ENCODE measurements at regions of chr6 and their contacts with region 1.

Region 1: GRCh38 chr6:31971993-31972708 is at the start of gene DXO:
- DNase-seq: peak; percentile 94 to 95
- ATAC-seq: peak; percentile 97 to 98
- H3K4me3 ChIP-seq: peak within 1 kb of the TSS; percentile 74 to 91 (median 85)
- H3K27ac ChIP-seq: peak within 1 kb of the TSS; percentile 90 to 97 (median 92)
- H3K4me1 ChIP-seq: peaks cover 23 to 29% of the 10 kb centered on the region in 2 donors
- H3K27me3 ChIP-seq: no peaks in the 10 kb centered on the region
- CTCF ChIP-seq: no peak
- POLR2A ChIP-seq: peak; percentile 67 to 74
- total RNA-seq, gene DXO: 5.8 to 11.5 (median 8.5) TPM

Region 2: DNA sequence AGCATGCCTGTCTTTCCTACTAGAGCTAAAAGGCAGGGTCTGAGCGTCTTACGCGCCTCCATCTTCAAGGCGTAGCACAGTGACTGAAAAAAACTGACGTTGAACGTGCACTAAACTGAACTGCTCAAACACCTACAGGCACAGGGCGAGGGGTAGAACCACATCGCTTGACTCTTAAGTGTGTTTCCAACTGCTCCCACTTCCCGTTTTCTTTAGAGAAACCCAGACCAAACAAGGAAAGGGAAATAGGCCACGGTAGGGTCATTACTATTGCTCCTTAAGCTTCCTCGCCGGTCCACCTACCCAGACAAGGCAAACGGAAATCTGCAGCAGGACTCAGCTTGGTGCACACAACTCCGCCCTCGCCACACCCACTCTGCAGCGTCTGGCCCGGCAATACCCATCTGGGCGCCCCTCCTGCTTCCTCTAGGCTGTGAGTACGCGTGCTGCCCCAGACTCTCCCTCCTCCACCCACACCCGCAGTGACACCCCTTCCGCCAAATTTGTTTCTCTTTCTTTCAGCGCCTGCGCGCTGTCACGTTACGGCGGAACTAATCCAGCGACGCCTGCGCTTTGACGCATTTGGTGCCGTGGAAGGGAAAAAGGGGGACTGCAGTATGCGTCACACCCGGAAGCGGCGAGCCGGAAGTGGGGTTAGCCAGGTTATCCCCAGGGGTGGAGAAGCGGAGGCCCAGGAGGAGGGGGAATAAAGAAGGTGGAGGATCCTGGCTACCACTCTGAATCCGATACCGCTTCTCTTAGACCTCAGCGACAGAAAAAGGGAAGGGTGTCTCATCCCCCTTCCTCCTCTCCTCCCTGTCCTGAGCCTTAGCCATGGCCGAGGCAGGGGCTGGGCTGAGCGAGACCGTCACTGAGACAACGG is 1905.3 kb before region 1 on chr6 and contains the start of gene PPP1R11:
- in situ Hi-C with region 1: no loop called
- intact Hi-C with region 1: loop called (anchors 10 kb)
- DNase-seq: peak; percentile 97 to 98
- ATAC-seq: peak; percentile 95 to 96
- H3K4me3 ChIP-seq: peak within 1 kb of the TSS; percentile 79 to 95 (median 86)
- H3K27ac ChIP-seq: peak within 1 kb of the TSS; percentile 85 to 93 (median 90)
- H3K4me1 ChIP-seq: peaks cover 29 to 33% of the 10 kb centered on the region in 2 donors
- H3K27me3 ChIP-seq: peaks cover 9 to 16% (median 10%) of the 10 kb centered on the region in 3 donors
- CTCF ChIP-seq: peak in 1 of 5 experiments; percentile 8
- POLR2A ChIP-seq: peak; percentile 57 to 80
- total RNA-seq, gene PPP1R11: 34.0 to 72.4 (median 49.9) TPM

Region 3: GRCh38 chr6:31739639-31740396 is 232.3 kb before region 1 on chr6 and contains the start of gene MSH5:
- in situ Hi-C with region 1: no loop called
- intact Hi-C with region 1: loop called (anchors 10 kb)
- DNase-seq: peak; percentile 99
- ATAC-seq: peak; percentile 99
- H3K4me3 ChIP-seq: peak within 1 kb of the TSS; percentile 62 to 79 (median 73)
- H3K27ac ChIP-seq: peak within 1 kb of the TSS; percentile 47 to 68 (median 63)
- H3K4me1 ChIP-seq: peaks cover 12 to 21% of the 10 kb centered on the region in 2 donors
- H3K27me3 ChIP-seq: peaks cover 0 to 9% (median 5%) of the 10 kb centered on the region in 3 donors
- CTCF ChIP-seq: no peak
- POLR2A ChIP-seq: peak; percentile 31 to 52
- total RNA-seq, gene MSH5: 0.35 to 7.8 (median 1.6) TPM

Region 4: GRCh38 chr6:31901953-31902643 is 70.1 kb before region 1 on chr6 and contains the start of gene ZBTB12:
- in situ Hi-C with region 1: loop called in 1 of 4 experiments (anchors 10 kb)
- intact Hi-C with region 1: no loop called
- DNase-seq: peak; percentile 78 to 82
- ATAC-seq: peak; percentile 58 to 65
- H3K4me3 ChIP-seq: peak within 1 kb of the TSS; percentile 56 to 93 (median 80)
- H3K27ac ChIP-seq: peak within 1 kb of the TSS; percentile 78 to 89 (median 86)
- H3K4me1 ChIP-seq: peaks cover 15 to 19% of the 10 kb centered on the region in 2 donors
- H3K27me3 ChIP-seq: no peaks in the 10 kb centered on the region
- CTCF ChIP-seq: peak in 1 of 5 experiments; percentile 20
- POLR2A ChIP-seq: peak; percentile 22 to 33
- total RNA-seq, gene ZBTB12: 0.26 TPM in 1 of 4 donors, not detected in the others

Region 5: DNA sequence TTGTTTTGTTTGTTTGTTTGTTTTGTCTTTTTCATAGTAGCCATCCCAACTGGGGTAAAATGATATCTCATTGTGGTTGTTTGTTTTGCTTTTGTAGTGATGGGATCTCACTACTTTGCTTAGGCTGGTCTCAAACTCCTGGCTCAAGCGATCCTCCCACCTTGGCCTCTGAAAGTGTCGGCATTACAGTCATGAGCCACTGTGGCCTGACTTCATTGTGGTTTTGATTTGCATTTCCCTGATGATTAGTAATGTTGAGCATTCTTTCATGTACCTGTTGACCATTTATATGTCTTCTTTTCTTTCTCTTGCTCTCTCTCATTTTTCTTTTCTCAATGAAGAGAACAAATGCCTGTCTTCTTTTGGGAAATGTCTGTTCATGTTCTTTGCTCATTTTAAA is 1068.0 kb after region 1 on chr6:
- in situ Hi-C with region 1: no loop called
- intact Hi-C with region 1: no loop called
- DNase-seq: no peak
- ATAC-seq: no peak
- H3K4me3 ChIP-seq: no peak overlapping the region
- H3K27ac ChIP-seq: no peak overlapping the region
- H3K4me1 ChIP-seq: no peaks in the 10 kb centered on the region
- H3K27me3 ChIP-seq: peaks cover 0 to 4% (median 0%) of the 10 kb centered on the region in 3 donors
- CTCF ChIP-seq: no peak
- POLR2A ChIP-seq: no peak

Measured in gastrocnemius medialis (tissue), 4 donors.